ENCODE measurements at regions of chr20 and their contacts with region 1.

Region 1: GRCh38 chr20:20637998-20638725 is 74.3 kb downstream of the RALGAPA2 start:
- DNase-seq: no peak
- H3K4me3 ChIP-seq: no peak overlapping the region
- H3K27ac ChIP-seq: no peak overlapping the region
- H3K4me1 ChIP-seq: no peaks in the 10 kb centered on the region
- H3K27me3 ChIP-seq: no peaks in the 10 kb centered on the region
- CTCF ChIP-seq: no peak
- POLR2A ChIP-seq: no peak

Region 2: DNA sequence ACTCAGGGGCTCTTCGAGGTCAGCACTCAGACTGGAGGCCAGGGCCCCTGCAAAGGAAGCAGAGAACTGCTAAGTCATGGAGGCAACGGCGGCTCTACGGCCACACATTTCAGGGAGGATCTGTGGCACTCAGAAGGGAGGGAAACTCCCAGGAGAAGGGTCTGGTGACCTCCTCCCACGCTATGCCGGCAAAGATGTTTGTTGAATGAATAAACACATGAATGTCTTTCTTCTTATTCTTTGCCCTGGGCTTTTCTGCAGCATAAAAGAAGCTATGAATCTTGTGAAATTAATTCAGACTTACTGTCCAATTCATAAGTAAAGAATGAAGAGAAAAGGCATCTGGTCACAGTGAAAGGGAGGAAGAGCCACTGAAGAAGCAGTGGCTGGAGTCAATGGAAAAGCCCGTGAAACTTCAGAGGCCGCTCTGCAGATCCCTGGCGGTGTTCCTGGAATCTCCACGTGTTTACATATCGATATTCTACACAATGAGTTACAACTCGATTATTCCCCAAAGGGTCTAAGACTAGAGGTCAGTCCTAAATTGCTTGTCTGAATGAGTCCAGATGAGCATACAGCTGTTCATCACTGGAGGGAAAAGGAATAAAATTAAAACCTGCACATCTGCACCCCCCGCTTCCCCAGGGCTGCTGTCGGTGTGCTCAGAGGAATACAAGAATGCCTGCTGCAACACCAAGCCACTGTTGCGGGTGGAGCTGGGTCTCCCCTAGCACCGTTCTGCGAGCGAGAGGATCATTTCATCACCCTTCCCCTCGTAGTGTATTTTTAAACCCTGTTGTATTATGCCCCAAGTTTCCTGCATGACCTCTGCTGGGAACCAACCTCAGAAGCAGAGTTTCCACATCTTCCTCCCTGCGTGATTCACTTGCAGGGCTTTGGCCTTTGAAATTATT is 244.7 kb before region 1 on chr20:
- intact Hi-C with region 1: loop called (anchors 5 kb)
- DNase-seq: no peak
- H3K4me3 ChIP-seq: no peak overlapping the region
- H3K27ac ChIP-seq: no peak overlapping the region
- H3K4me1 ChIP-seq: peaks cover 4% of the 10 kb centered on the region
- H3K27me3 ChIP-seq: no peaks in the 10 kb centered on the region
- CTCF ChIP-seq: no peak
- POLR2A ChIP-seq: no peak

Region 3: DNA sequence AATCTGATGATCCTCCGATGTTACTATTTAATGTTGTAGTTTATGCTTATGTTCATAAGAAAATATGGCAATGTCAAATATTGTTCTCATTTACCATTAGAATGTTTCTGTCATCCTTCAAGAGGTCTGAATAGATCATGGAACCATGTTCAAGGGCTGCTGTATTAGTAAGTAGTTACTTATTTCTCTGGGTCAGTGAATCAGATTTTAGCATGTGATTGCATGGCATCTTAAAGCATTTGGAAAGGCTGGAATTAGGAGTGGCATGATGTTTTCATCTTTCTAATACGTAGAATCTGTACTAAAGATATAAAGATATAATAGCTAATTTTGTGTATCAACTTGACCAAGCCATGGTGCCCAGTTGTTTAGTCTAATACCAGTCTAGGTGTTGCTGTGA is 799.7 kb after region 1 on chr20:
- intact Hi-C with region 1: no loop called
- DNase-seq: no peak
- H3K4me3 ChIP-seq: no peak overlapping the region
- H3K27ac ChIP-seq: no peak overlapping the region
- H3K4me1 ChIP-seq: no peaks in the 10 kb centered on the region
- H3K27me3 ChIP-seq: no peaks in the 10 kb centered on the region
- CTCF ChIP-seq: no peak
- POLR2A ChIP-seq: no peak